Tibial artery (tissue), 4 donors: ENCODE measurements at regions of chr3 and their contacts with region 1.

Region 1: DNA sequence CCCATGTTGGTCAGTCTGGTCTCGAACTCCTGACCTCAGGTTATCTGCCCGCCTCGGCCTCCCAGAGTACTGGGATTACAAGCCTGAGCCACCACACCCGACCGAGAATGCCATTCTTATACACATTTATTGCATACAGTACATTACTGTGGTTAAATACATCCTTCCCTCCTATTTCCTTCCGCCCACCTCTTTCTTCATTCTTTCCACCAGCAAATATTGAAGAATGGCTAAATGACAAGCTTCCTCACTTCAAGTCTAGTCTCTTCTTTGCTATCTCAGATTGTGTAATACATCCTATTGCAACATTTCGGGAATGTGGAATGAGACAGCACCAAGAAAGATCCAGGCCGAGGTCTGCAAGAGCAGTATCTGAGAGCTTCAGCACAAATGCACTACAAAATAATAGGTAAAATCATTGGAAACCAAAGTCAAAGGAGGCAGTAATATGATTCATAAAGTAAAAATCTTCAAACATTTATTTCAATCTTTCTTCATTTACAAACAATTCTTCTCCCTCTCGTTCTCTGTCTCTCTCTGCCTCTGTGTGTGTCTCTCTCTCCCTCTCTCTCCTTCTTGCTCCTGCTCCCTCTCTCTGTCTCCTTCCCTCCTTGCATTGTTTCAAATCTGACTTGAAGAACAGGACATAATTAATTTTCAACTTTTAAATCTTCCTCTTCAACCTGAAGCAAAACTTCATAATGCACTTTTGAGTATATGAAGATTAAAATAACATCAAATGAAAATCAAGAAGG is 94.7 kb upstream of the TGFBR2 start:
- DNase-seq: no peak
- H3K4me3 ChIP-seq: no peak overlapping the region
- H3K27ac ChIP-seq: peak overlapping the region; percentile 58 to 70
- H3K4me1 ChIP-seq: peaks cover 0 to 49% (median 30%) of the 10 kb centered on the region in 4 donors
- H3K27me3 ChIP-seq: no peaks in the 10 kb centered on the region
- CTCF ChIP-seq: no peak

Region 2: GRCh38 chr3:30347679-30348216 is 164.0 kb before region 1 on chr3:
- intact Hi-C with region 1: loop called (anchors 10 kb)
- DNase-seq: no peak
- H3K4me3 ChIP-seq: no peak overlapping the region
- H3K27ac ChIP-seq: no peak overlapping the region
- H3K4me1 ChIP-seq: peaks cover 0 to 55% (median 5%) of the 10 kb centered on the region in 4 donors
- H3K27me3 ChIP-seq: no peaks in the 10 kb centered on the region
- CTCF ChIP-seq: no peak